ENCODE measurements at regions of chr5 and their contacts with region 1.

Region 1: DNA sequence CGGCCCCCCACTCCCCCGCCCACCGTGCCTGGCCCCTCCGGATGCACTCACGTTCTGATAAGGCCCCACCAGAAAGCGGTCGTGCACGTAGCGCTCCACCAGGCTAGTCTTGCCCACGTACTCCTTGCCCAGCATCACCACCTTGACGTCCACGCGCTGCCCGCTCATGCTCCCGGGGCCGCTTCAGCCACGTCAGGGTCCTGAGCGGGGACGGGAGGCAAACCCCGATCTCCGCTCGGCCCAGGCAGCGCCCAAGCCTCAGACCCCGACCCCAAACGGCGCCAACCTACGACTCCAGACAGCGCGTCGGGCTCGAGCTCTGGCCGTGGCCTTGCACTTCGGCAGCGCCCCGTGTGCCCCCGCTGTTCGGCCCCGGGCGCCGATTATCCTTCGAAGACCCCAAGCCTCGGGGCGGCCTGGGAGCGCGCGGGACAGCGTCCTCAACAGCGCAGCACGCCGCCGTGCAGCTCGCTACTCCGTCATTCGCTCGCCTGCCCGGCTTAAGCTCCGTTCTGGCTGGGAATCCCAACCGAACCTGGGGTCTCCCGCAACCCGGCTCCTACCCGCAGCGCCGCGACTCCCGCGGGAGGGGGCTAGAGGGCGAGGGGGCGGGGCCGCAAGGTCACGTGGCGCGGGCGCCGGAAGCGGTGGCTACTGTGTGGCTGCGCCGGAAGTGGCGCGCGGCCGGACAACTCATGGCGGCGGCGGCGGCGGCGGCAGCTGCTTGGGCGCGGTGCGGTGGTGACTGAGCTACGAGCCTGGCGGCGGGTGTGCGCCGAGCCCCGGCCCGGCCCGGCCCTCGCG is at the starts of genes PRELID1 and RAB24:
- DNase-seq: peak; percentile 84 to 88 (median 86)
- H3K4me3 ChIP-seq: peak within 1 kb of the TSS; percentile 84 to 94
- H3K4me3 Mint-ChIP-seq: peak within 1 kb of the TSS; percentile 91 to 97 (median 95)
- H3K27ac ChIP-seq: peak within 1 kb of the TSS; percentile 78
- H3K27ac Mint-ChIP-seq: peak within 1 kb of the TSS; percentile 84 to 97 (median 92)
- H3K4me1 ChIP-seq: peaks cover 68% of the 10 kb centered on the region
- H3K4me1 Mint-ChIP-seq: peaks cover 48 to 86% (median 69%) of the 10 kb centered on the region in 4 donors
- H3K27me3 ChIP-seq: no peaks in the 10 kb centered on the region
- H3K27me3 Mint-ChIP-seq: no peaks in the 10 kb centered on the region
- total RNA-seq, gene PRELID1: 70.9 to 72.1 TPM
- total RNA-seq, gene RAB24: 19.8 to 20.5 TPM

Region 2: GRCh38 chr5:177133091-177133852 is 170.1 kb before region 1 on chr5 and contains the start of gene NSD1:
- CTCF ChIA-PET with region 1: no interaction called
- POLR2A ChIA-PET with region 1: interaction called, 14 read pairs
- intact Hi-C with region 1: loop called (anchors 5 kb)
- DNase-seq: peak; percentile 90 to 93 (median 92)
- H3K4me3 ChIP-seq: peak within 1 kb of the TSS; percentile 20 to 67
- H3K4me3 Mint-ChIP-seq: peak within 1 kb of the TSS; percentile 85 to 90 (median 87)
- H3K27ac ChIP-seq: peak within 1 kb of the TSS; percentile 66
- H3K27ac Mint-ChIP-seq: peak within 1 kb of the TSS; percentile 82 to 94 (median 92)
- H3K4me1 ChIP-seq: peaks cover 63% of the 10 kb centered on the region
- H3K4me1 Mint-ChIP-seq: peaks cover 36 to 73% (median 52%) of the 10 kb centered on the region in 4 donors
- H3K27me3 ChIP-seq: no peaks in the 10 kb centered on the region
- H3K27me3 Mint-ChIP-seq: no peaks in the 10 kb centered on the region
- total RNA-seq, gene NSD1: 116 to 122 TPM